Posterior vena cava (tissue), 2 donors: ENCODE measurements at regions of chr6 and their contacts with region 1.

Region 1: GRCh38 chr6:45618259-45618658 is 240.5 kb upstream of the SUPT3H start:
- DNase-seq: no peak

Region 2: GRCh38 chr6:45637611-45638257 is 19.5 kb after region 1 on chr6:
- intact Hi-C with region 1: loop called in 1 of 2 experiments (anchors 1 kb)
- DNase-seq: no peak